ENCODE measurements at regions of chr14 and their contacts with region 1.

Region 1: DNA sequence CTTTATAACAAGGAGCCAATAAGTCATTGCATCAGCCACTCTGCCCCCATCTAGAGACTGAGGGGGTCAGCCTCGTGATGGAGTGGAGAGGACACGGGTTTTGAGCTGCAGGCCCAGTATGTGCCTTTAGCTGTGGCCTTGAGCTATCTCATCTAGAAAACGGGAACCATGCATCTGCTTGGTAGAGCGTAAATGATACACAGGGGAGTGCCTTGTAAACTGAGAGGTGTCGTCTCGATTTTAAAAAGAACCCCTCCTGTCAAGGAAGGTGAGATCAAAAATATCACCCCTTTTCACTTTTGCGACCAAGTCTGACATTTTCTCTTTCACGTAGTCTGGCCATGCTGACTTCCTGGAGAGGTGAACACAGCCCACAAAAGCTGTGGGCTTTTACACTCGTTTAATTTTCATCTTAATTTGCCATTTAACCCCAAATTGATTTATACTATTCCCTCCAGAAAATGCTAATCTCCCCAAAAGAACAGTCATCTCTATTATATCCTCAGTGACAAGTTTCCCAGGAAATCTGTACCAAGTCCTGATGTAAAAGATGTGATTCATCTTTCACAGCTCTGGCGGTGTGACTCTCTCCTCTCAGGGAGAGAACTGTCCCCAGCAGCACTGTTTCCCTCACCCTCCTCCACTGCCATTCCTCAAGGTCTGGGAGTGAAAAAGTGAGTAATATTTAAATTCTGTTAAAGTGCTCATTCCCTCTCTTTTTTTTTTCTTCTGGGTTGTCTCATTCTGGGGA is 30.6 kb downstream of the VCPKMT start:
- DNase-seq: peak; percentile 70
- H3K4me3 Mint-ChIP-seq: peak overlapping the region; percentile 30
- H3K27ac Mint-ChIP-seq: peak overlapping the region; percentile 91
- H3K4me1 Mint-ChIP-seq: peaks cover 92% of the 10 kb centered on the region
- H3K27me3 Mint-ChIP-seq: no peaks in the 10 kb centered on the region

Region 2: GRCh38 chr14:49867831-49868723 is 217.7 kb before region 1 on chr14:
- CTCF ChIA-PET with region 1: interaction called, 31 read pairs
- POLR2A ChIA-PET with region 1: interaction called, 14 read pairs
- intact Hi-C with region 1: loop called (anchors 1 kb)
- DNase-seq: peak; percentile 99
- H3K4me3 Mint-ChIP-seq: peak overlapping the region; percentile 94
- H3K27ac Mint-ChIP-seq: peak overlapping the region; percentile 85
- H3K4me1 Mint-ChIP-seq: peaks cover 25% of the 10 kb centered on the region
- H3K27me3 Mint-ChIP-seq: no peaks in the 10 kb centered on the region

Region 3: GRCh38 chr14:49971156-49972130 is 114.3 kb before region 1 on chr14:
- CTCF ChIA-PET with region 1: interaction called, 3 read pairs
- POLR2A ChIA-PET with region 1: interaction called, 15 read pairs
- intact Hi-C with region 1: loop called (anchors 2 kb)
- DNase-seq: peak; percentile 78
- H3K4me3 Mint-ChIP-seq: peak overlapping the region; percentile 62
- H3K27ac Mint-ChIP-seq: peak overlapping the region; percentile 95
- H3K4me1 Mint-ChIP-seq: peaks cover 61% of the 10 kb centered on the region
- H3K27me3 Mint-ChIP-seq: no peaks in the 10 kb centered on the region

Region 4: GRCh38 chr14:50045039-50045711 is 40.6 kb before region 1 on chr14:
- CTCF ChIA-PET with region 1: interaction called, 5 read pairs
- POLR2A ChIA-PET with region 1: interaction called, 104 read pairs
- intact Hi-C with region 1: loop called (anchors 1 kb)
- DNase-seq: peak; percentile 90
- H3K4me3 Mint-ChIP-seq: peak overlapping the region; percentile 0
- H3K27ac Mint-ChIP-seq: peak overlapping the region; percentile 87
- H3K4me1 Mint-ChIP-seq: peaks cover 59% of the 10 kb centered on the region
- H3K27me3 Mint-ChIP-seq: no peaks in the 10 kb centered on the region

Region 5: GRCh38 chr14:50067723-50068495 is 17.8 kb before region 1 on chr14:
- CTCF ChIA-PET with region 1: interaction called, 27 read pairs
- POLR2A ChIA-PET with region 1: interaction called, 82 read pairs
- intact Hi-C with region 1: loop called (anchors 1 kb)
- DNase-seq: peak; percentile 56
- H3K4me3 Mint-ChIP-seq: no peak overlapping the region
- H3K27ac Mint-ChIP-seq: peak overlapping the region; percentile 53
- H3K4me1 Mint-ChIP-seq: peaks cover 75% of the 10 kb centered on the region
- H3K27me3 Mint-ChIP-seq: no peaks in the 10 kb centered on the region

Region 6: DNA sequence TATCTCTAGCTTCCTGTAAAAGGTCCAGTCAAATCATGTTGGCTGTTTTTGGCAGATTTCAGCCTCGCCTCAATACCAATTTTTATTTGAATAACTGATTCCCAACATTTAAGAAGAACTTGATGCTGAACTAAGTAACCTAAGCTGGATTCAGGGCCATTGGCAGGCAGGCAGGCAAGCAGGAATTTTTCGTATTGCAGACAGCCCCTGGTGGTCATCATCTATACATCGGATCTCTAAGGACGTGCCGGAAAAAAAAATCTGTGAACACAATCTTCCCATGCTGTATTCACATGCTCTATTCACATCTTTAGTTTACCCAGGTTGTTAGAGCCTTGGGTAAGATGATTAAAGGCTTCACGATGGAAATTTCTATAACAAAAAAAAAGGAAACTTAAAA is 23.6 kb after region 1 on chr14:
- CTCF ChIA-PET with region 1: interaction called, 10 read pairs
- POLR2A ChIA-PET with region 1: no interaction called
- intact Hi-C with region 1: no loop called
- DNase-seq: no peak
- H3K4me3 Mint-ChIP-seq: no peak overlapping the region
- H3K27ac Mint-ChIP-seq: no peak overlapping the region
- H3K4me1 Mint-ChIP-seq: peaks cover 46% of the 10 kb centered on the region
- H3K27me3 Mint-ChIP-seq: no peaks in the 10 kb centered on the region

Region 7: DNA sequence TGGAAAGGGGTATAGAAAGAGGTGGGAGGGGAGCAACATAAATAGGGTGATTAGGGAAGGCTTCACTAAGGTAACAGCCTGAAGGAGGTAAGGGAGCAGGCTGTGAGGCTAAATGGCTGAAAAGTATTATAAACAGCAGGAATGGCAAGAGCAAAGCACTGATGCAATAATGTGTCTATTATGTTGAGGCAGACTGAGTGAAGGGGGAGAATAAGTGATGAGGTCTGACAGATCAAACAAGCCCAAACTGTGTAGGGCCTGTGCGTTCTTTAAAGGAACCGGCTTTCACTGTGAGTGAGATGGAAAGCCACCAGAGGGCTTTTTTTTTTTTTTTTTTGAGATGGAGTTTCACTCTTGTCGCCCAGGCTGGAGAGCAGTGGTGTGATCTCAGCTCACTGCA is 37.3 kb after region 1 on chr14:
- CTCF ChIA-PET with region 1: no interaction called
- POLR2A ChIA-PET with region 1: no interaction called
- intact Hi-C with region 1: no loop called
- DNase-seq: no peak
- H3K4me3 Mint-ChIP-seq: no peak overlapping the region
- H3K27ac Mint-ChIP-seq: peak overlapping the region; percentile 15
- H3K4me1 Mint-ChIP-seq: peaks cover 5% of the 10 kb centered on the region
- H3K27me3 Mint-ChIP-seq: no peaks in the 10 kb centered on the region

Measured in activated CD4-positive, alpha-beta memory T cell treated with anti-CD3 and anti-CD28 coated beads for 36 hours (primary cell).